CD4-positive, alpha-beta memory T cell (primary cell): ENCODE measurements at regions of chr14 and their contacts with region 1.

Region 1: DNA sequence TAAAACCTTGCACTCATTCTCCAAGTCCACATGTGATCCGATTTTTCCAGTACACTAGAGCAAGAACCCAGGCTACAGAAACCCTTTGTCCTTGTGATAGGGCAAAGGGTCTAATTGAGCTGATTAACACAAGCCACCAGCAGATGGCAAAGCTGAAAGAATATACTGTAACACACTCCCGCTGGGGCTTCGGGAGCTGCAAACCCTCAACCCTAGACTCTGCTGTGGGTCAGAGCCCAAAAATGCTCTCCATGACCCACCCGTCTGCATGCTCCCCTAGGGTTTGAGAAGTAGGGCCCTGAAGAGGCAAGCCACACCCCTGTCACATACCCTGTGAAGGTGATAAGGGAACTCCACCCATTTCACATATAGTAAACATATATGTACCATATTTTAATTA is 33.6 kb upstream of the PCNX1 start:
- DNase-seq: peak; percentile 31 to 43 (median 35)
- H3K4me3 ChIP-seq: no peak overlapping the region
- H3K4me3 Mint-ChIP-seq: peak overlapping the region in 5 of 8 donors; percentile 42 to 69 (median 61)
- H3K27ac ChIP-seq: no peak overlapping the region
- H3K27ac Mint-ChIP-seq: peak overlapping the region; percentile 68 to 90 (median 86)
- H3K4me1 ChIP-seq: peaks cover 23% of the 10 kb centered on the region
- H3K4me1 Mint-ChIP-seq: peaks cover 10 to 26% (median 21%) of the 10 kb centered on the region in 4 donors
- H3K27me3 ChIP-seq: no peaks in the 10 kb centered on the region
- H3K27me3 Mint-ChIP-seq: no peaks in the 10 kb centered on the region

Region 2: GRCh38 chr14:70821584-70822529 is 51.8 kb before region 1 on chr14:
- CTCF ChIA-PET with region 1: interaction called, 16 read pairs
- POLR2A ChIA-PET with region 1: interaction called, 5 read pairs
- intact Hi-C with region 1: loop called (anchors 5 kb)
- DNase-seq: peak; percentile 37 to 79 (median 49)
- H3K4me3 ChIP-seq: peak overlapping the region; percentile 52 to 73
- H3K4me3 Mint-ChIP-seq: peak overlapping the region; percentile 83 to 93 (median 86)
- H3K27ac ChIP-seq: peak overlapping the region; percentile 14
- H3K27ac Mint-ChIP-seq: peak overlapping the region in 5 of 7 donors; percentile 62 to 77 (median 68)
- H3K4me1 ChIP-seq: peaks cover 18% of the 10 kb centered on the region
- H3K4me1 Mint-ChIP-seq: peaks cover 10 to 23% (median 14%) of the 10 kb centered on the region in 4 donors
- H3K27me3 ChIP-seq: no peaks in the 10 kb centered on the region
- H3K27me3 Mint-ChIP-seq: no peaks in the 10 kb centered on the region

Region 3: DNA sequence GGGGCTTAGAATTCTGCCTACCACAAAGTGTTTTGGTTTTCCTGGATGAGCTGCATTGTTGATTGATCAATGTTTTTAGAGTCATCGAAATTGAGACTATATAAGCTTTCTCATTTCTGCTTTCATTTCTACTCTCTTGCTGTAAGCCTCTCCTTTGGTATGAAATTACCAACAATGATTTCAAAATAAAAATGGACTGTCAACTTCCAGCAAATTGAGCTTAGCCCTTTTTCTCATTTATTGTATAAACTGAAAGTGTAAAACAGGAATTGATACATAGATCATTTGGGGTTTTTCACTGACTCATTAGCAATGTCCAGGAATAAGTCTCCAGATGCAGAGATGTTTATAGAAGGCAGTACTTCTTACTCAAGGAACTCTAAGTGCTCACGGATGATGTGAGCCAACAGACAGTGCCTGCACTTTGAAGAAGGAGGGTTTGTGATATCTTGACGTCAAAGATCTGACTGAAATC is 13.6 kb after region 1 on chr14:
- CTCF ChIA-PET with region 1: interaction called, 12 read pairs
- POLR2A ChIA-PET with region 1: interaction called, 62 read pairs
- intact Hi-C with region 1: no loop called
- DNase-seq: peak in 3 of 5 donors; percentile 27 to 51 (median 30)
- H3K4me3 ChIP-seq: peak overlapping the region; percentile 11 to 42
- H3K4me3 Mint-ChIP-seq: peak overlapping the region; percentile 69 to 90 (median 76)
- H3K27ac ChIP-seq: peak overlapping the region; percentile 55
- H3K27ac Mint-ChIP-seq: peak overlapping the region; percentile 87 to 97 (median 91)
- H3K4me1 ChIP-seq: peaks cover 96% of the 10 kb centered on the region
- H3K4me1 Mint-ChIP-seq: peaks cover 66 to 99% (median 86%) of the 10 kb centered on the region in 4 donors
- H3K27me3 ChIP-seq: no peaks in the 10 kb centered on the region
- H3K27me3 Mint-ChIP-seq: no peaks in the 10 kb centered on the region